Activated B cell treated with CpG ODN at 0.5 μM for 24 hours (primary cell): ENCODE measurements at regions of chr17 and their contacts with region 1.

Region 1: DNA sequence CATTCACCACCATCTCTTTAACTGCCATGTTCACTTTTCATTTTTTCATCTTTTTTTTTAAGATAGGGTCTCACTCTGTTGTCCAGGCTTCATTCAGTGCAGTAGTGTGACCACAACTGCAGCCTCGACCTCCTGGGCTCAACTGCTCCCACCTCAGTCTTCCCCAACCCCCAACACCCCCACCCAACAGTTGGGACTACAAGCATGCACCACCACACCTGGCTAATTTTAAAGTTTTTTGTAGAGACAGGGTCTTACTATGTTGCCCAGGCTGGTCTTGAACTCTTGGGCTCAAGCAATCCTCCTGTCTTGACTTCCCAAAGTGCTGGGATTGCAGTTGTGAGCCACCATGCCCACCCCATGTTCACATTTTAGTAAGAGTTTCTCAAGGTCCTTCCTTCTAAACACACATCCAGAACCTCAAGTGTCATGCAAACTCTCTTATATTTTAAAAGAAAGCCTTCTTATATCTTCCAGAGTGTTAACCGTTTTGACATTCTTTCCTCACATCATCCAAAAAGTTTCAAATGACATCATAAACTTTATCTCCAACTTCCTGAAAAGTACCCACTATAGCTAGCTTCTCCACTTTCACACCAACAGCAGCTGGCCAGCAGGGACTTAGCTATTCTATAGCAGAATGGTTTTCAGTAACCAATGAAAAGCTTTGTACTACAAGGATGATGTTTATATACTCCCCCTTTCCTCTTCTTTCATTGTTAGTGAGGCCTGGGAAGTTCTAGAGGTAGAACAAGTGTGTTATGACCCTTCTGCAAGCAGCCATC is 49.3 kb downstream of the TRAF4 start:
- DNase-seq: no peak
- ATAC-seq: no peak
- H3K4me3 Mint-ChIP-seq: no peak overlapping the region
- H3K27ac Mint-ChIP-seq: no peak overlapping the region
- H3K4me1 Mint-ChIP-seq: no peaks in the 10 kb centered on the region
- H3K27me3 Mint-ChIP-seq: no peaks in the 10 kb centered on the region
- CTCF ChIP-seq: no peak

Region 2: GRCh38 chr17:28777178-28777577 is 15.9 kb before region 1 on chr17:
- CTCF ChIA-PET with region 1: no interaction called
- POLR2A ChIA-PET with region 1: no interaction called
- intact Hi-C with region 1: loop called (anchors 2 kb)
- DNase-seq: no peak
- ATAC-seq: no peak
- H3K4me3 Mint-ChIP-seq: no peak overlapping the region
- H3K27ac Mint-ChIP-seq: no peak overlapping the region
- H3K4me1 Mint-ChIP-seq: peaks cover 32% of the 10 kb centered on the region
- H3K27me3 Mint-ChIP-seq: no peaks in the 10 kb centered on the region
- CTCF ChIP-seq: no peak

Region 3: DNA sequence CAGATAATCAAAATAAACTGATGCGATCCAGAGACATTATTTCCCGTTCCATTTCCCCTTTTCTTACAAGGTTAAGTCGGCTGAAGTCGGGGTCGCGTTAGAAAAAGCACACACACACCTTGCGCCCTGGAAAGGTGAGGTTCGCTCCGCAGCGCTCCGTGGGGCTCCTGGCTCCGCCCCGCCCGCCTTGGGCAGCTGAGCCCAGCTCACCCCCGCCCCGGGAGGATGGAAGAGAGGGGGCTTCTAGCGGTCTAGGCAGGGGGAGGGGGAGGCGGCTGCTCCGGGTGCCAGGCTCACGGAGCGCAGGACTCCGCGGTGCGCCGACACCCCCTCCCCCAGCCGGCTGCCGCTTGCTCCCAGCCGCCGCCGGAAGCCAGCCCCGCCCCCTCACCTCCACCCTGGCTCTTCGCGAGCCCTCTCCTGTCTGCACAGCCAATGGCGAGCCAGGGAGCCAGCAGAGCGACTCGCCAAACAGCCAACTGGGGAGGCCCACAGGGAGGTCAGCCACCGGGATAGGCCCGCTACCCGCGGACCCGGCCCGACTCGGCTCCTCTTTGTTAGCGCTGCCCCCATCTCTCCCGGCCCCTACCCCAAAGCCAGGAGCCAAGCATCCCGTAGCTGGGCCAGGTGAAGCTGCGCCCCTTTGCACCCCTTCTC is 19.1 kb after region 1 on chr17:
- CTCF ChIA-PET with region 1: no interaction called
- POLR2A ChIA-PET with region 1: interaction called, 10 read pairs
- intact Hi-C with region 1: no loop called
- DNase-seq: peak; percentile 89
- ATAC-seq: peak; percentile 100
- H3K4me3 Mint-ChIP-seq: peak overlapping the region; percentile 87
- H3K27ac Mint-ChIP-seq: peak overlapping the region; percentile 83
- H3K4me1 Mint-ChIP-seq: peaks cover 31% of the 10 kb centered on the region
- H3K27me3 Mint-ChIP-seq: no peaks in the 10 kb centered on the region
- CTCF ChIP-seq: no peak